ENCODE measurements at regions of chr7 and their contacts with region 1.

Region 1: GRCh38 chr7:131501422-131501821 is 55.0 kb downstream of the PODXL start:
- DNase-seq: no peak
- H3K4me3 ChIP-seq: no peak overlapping the region
- H3K27ac ChIP-seq: peak overlapping the region; percentile 32 to 89
- H3K4me1 ChIP-seq: peaks cover 20 to 31% of the 10 kb centered on the region in 2 experiments; a peak in 3 of 4 replicates
- H3K27me3 ChIP-seq: no peaks in the 10 kb centered on the region
- CTCF ChIP-seq: no peak
- EP300 ChIP-seq: no peak
- RAD21 ChIP-seq: no peak

Region 2: DNA sequence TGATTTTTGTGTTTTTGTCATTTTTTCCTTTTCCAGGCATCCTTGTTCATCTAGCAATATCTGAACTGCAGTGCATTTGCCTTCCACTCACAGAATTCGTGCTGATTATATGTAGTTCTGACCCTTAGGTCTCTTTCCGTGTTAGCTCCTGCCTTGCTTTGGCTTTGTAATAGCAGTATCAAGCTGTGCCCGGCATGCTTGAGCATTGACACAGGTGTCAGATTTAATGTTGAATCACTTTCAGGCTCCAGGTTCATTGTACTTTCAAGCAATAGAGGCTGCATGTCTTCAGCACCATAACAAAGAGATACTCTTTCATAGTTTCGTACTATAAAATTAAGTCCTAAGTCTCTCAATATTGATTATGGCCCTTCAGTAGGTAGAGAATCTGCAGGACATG is 29.8 kb before region 1 on chr7:
- CTCF ChIA-PET with region 1: no interaction called
- POLR2A ChIA-PET with region 1: no interaction called
- DNase-seq: no peak
- H3K4me3 ChIP-seq: no peak overlapping the region
- H3K27ac ChIP-seq: no peak overlapping the region
- H3K4me1 ChIP-seq: no peaks in the 10 kb centered on the region
- H3K27me3 ChIP-seq: no peaks in the 10 kb centered on the region
- CTCF ChIP-seq: no peak
- EP300 ChIP-seq: no peak
- RAD21 ChIP-seq: no peak

Region 3: DNA sequence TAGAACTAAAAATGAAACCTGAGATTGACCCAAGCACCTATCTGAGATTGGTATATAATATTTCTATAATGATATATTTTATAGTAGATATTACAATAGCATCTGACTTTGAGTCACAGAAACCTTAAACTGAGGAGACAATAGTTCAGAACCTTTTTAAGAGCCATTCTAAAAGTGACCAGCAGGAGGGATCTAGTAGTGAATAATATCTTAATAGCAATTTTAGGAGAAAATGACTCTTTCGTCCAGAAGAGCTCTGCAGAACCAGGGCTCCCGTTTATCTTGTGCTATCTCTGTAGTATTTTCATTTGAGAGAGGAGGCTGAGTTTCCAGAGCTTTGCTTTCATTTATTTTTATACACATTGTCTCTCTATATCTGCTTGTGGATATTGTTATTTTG is 13.1 kb before region 1 on chr7:
- CTCF ChIA-PET with region 1: interaction called, 91 read pairs
- POLR2A ChIA-PET with region 1: interaction called, 5 read pairs
- DNase-seq: no peak
- H3K4me3 ChIP-seq: no peak overlapping the region
- H3K27ac ChIP-seq: peak overlapping the region in 1 of 2 experiments; percentile 2; a peak in 1 of 4 replicates
- H3K4me1 ChIP-seq: peaks cover 0 to 10% of the 10 kb centered on the region in 2 experiments; a peak in 2 of 4 replicates
- H3K27me3 ChIP-seq: no peaks in the 10 kb centered on the region
- CTCF ChIP-seq: peak; percentile 61
- EP300 ChIP-seq: no peak
- RAD21 ChIP-seq: no peak

Region 4: DNA sequence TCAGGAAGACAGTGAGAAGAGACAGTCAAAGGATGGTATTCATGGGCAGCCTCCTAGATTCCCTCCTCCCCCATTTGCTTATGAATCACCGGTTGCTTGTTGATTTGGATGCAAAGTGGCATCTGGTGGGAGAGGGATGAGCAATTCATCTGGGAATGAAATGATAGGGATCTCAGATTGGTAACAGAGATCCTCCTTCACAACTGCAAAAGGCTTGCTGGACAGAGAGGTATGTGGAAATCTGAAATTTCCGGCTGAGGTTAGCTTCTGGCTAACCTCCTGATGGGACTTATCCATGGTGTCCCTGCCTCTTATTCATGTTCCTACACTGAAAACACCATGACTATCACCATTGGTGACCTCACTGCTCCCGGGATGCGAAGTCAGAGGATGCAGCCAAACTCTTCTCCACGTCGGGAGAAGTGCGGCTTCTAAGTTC is 103.4 kb after region 1 on chr7:
- CTCF ChIA-PET with region 1: no interaction called
- POLR2A ChIA-PET with region 1: no interaction called
- DNase-seq: no peak
- H3K4me3 ChIP-seq: no peak overlapping the region
- H3K27ac ChIP-seq: peak overlapping the region; percentile 79 to 90; a peak in 3 of 4 replicates
- H3K4me1 ChIP-seq: peaks cover 27 to 68% of the 10 kb centered on the region in 2 experiments
- H3K27me3 ChIP-seq: no peaks in the 10 kb centered on the region
- CTCF ChIP-seq: no peak
- EP300 ChIP-seq: peak; percentile 71 to 100
- RAD21 ChIP-seq: no peak

Measured in SK-N-SH (cell line).